Prostate gland (tissue), 2 donors: ENCODE measurements at regions of chr4 and their contacts with region 1.

Region 1: GRCh38 chr4:112327965-112328733 is 31.0 kb downstream of the ALPK1 start:
- DNase-seq: no peak
- H3K4me3 ChIP-seq: no peak overlapping the region
- H3K27ac ChIP-seq: no peak overlapping the region
- H3K4me1 ChIP-seq: no peaks in the 10 kb centered on the region
- H3K27me3 ChIP-seq: no peaks in the 10 kb centered on the region
- CTCF ChIP-seq: peak in 3 of 4 experiments; percentile 20 to 61 (median 42)
- POLR2A ChIP-seq: no peak

Region 2: DNA sequence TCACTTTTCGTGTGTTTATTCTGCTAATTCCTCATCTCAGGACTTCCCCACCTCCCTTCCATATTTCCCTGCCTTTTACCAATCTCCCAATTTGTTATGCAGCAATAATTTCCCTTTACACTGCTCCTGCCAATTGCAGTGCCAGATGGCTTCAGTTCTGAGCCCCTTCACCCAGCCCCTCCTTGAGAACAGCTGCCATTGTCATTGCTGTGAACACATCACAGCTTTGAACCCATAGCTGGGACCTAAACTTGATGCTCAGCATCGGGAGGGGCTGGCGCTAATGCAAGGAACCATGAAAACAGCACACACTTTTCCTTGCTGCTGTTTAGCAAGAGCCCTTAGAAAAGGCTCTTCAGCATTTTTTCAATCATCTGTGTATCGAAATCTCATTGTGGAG is 73.9 kb after region 1 on chr4:
- intact Hi-C with region 1: no loop called
- DNase-seq: no peak
- H3K4me3 ChIP-seq: no peak overlapping the region
- H3K27ac ChIP-seq: no peak overlapping the region
- H3K4me1 ChIP-seq: no peaks in the 10 kb centered on the region
- H3K27me3 ChIP-seq: no peaks in the 10 kb centered on the region
- CTCF ChIP-seq: no peak
- POLR2A ChIP-seq: no peak

Region 3: DNA sequence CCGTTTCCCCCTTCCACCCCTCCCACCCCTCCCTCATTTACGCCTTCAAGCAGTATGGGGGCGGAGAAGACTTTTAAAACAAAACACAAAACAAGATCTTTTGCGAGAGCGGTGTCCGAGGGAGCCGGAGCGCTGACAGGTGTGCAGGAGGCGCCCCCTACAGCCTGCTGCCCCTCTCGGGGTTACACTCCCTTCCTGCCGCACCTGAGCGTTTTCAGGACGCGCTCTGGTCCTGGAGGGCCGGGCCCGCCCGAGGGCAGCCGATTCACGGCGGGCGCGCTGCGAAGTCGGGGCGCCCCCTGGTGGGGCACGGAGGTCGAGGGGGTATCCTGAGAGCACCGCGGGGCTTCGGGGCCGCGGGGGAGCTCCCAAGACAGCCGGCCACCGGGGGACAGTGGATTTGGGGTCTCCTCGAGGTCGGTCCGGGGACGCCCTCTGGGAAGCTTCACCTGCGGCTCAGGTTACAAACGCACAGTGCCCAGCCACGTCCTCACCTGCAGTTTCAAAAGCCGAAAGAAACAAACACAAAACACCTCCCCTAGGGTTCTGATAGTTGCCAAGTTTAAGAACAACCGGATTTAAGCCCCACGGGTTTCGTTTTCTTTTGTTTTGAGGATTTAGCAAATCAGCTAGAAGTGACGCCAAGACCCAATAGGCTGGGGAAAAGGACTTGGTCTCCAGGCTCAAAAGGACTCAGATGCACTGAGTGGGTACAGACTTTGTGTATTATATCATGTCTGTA is 195.8 kb after region 1 on chr4:
- intact Hi-C with region 1: loop called (anchors 10 kb)
- DNase-seq: no peak
- H3K4me3 ChIP-seq: no peak overlapping the region
- H3K27ac ChIP-seq: no peak overlapping the region
- H3K4me1 ChIP-seq: no peaks in the 10 kb centered on the region
- H3K27me3 ChIP-seq: peaks cover 40% of the 10 kb centered on the region
- CTCF ChIP-seq: peak; percentile 28 to 53 (median 45)
- POLR2A ChIP-seq: no peak

Region 4: DNA sequence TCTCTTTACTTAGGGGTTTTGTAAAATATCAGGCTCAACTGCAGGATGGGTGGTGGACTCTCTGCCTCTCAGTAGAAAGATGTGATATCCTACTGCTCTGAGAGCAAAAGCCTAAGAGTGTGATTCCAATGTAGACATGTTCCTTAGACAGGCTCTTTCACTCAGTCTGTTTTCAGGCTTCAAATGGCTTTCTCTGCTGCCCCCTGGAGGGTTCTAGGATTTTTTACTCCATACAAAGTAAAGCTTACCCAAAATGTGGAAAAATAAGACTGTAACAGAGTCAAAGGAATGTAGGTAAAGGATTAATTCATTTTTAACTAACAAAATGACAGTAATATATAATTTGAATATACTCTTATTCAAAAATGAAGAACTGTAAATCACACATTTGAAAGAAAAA is 276.4 kb after region 1 on chr4:
- intact Hi-C with region 1: loop called (anchors 5 kb)
- DNase-seq: peak; percentile 26
- H3K4me3 ChIP-seq: no peak overlapping the region
- H3K27ac ChIP-seq: no peak overlapping the region
- H3K4me1 ChIP-seq: no peaks in the 10 kb centered on the region
- H3K27me3 ChIP-seq: no peaks in the 10 kb centered on the region
- CTCF ChIP-seq: peak in 3 of 4 experiments; percentile 37 to 50 (median 44)
- POLR2A ChIP-seq: no peak